ENCODE measurements at regions of chr19 and their contacts with region 1.

Region 1: GRCh38 chr19:51108066-51108804 is at the start of gene CTU1:
- DNase-seq: peak; percentile 98 to 100
- H3K4me3 ChIP-seq: peak within 1 kb of the TSS; percentile 69 to 74
- H3K27ac ChIP-seq: peak within 1 kb of the TSS; percentile 37 to 45
- H3K4me1 ChIP-seq: peaks cover 6 to 9% of the 10 kb centered on the region in 2 donors
- H3K27me3 ChIP-seq: no peaks in the 10 kb centered on the region
- CTCF ChIP-seq: peak in 1 of 3 experiments; percentile 50
- total RNA-seq, gene CTU1: 8.9 TPM

Region 2: GRCh38 chr19:50376166-50377050 is 731.8 kb before region 1 on chr19 and contains the start of gene NR1H2:
- intact Hi-C with region 1: loop called (anchors 5 kb)
- DNase-seq: peak; percentile 77 to 97
- H3K4me3 ChIP-seq: peak within 1 kb of the TSS; percentile 88 to 90
- H3K27ac ChIP-seq: peak within 1 kb of the TSS; percentile 99 to 100
- H3K4me1 ChIP-seq: peaks cover 0 to 6% of the 10 kb centered on the region in 2 donors
- H3K27me3 ChIP-seq: no peaks in the 10 kb centered on the region
- CTCF ChIP-seq: no peak
- total RNA-seq, gene NR1H2: 150 TPM

Region 3: GRCh38 chr19:50804420-50805272 is 303.6 kb before region 1 on chr19:
- intact Hi-C with region 1: loop called (anchors 2 kb)
- DNase-seq: peak; percentile 95 to 99
- H3K4me3 ChIP-seq: peak overlapping the region; percentile 92 to 93
- H3K27ac ChIP-seq: peak overlapping the region; percentile 97
- H3K4me1 ChIP-seq: peaks cover 0 to 13% of the 10 kb centered on the region in 2 donors
- H3K27me3 ChIP-seq: no peaks in the 10 kb centered on the region
- CTCF ChIP-seq: no peak

Region 4: DNA sequence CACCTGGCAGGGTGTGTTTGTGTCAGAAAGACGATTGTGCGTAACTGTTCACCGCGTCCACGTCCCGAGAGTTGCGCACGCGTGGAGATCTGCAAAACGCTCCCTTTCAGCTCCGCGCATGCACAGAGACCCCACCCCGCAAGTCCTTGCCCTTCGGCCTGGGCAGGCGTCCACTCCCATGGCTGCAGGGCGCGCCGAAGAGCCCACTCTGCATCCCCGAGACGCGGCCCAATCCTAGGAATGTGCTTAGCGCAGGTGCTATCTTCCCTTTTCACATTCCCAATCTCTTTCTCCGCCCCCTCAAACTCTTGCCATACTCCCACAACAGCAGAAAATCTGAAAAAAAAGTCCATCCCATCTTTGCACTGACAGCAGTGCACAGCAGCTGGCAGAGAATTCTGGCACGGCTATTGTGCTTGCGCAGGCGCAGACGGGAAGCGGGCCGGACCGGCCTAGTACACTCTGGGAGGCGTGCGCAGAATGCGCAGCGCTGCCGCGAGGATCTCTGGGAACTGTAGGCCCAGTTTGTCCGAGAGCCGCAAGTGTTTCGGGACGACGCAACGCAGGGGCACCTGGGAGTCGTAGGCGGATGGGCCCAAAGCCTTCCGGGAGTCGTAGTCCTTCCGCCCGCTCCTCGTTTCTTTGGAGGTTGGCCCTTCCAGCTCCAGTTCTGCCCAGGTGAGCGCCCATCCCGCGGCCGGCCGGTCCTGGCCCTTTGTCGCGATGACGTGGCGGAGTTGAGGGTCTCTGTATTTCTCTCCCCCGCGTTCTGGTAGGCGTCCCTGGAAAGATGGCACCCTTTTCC is 485.9 kb after region 1 on chr19:
- intact Hi-C with region 1: loop called (anchors 1 kb)
- DNase-seq: peak; percentile 91 to 99
- H3K4me3 ChIP-seq: peak overlapping the region; percentile 71 to 84
- H3K27ac ChIP-seq: peak overlapping the region in 1 of 2 donors; percentile 58
- H3K4me1 ChIP-seq: peaks cover 10 to 11% of the 10 kb centered on the region in 2 donors
- H3K27me3 ChIP-seq: no peaks in the 10 kb centered on the region
- CTCF ChIP-seq: no peak

Region 5: GRCh38 chr19:51703575-51704515 is 595.6 kb after region 1 on chr19:
- intact Hi-C with region 1: loop called (anchors 10 kb)
- DNase-seq: peak; percentile 90 to 99
- H3K4me3 ChIP-seq: peak overlapping the region; percentile 60 to 76
- H3K27ac ChIP-seq: peak overlapping the region; percentile 80 to 93
- H3K4me1 ChIP-seq: peaks cover 9 to 17% of the 10 kb centered on the region in 2 donors
- H3K27me3 ChIP-seq: no peaks in the 10 kb centered on the region
- CTCF ChIP-seq: peak; percentile 32 to 54 (median 44)

Measured in ascending aorta (tissue), 2 donors.